Gastrocnemius medialis (tissue), 4 donors: ENCODE measurements at regions of chr5 and their contacts with region 1.

Region 1: DNA sequence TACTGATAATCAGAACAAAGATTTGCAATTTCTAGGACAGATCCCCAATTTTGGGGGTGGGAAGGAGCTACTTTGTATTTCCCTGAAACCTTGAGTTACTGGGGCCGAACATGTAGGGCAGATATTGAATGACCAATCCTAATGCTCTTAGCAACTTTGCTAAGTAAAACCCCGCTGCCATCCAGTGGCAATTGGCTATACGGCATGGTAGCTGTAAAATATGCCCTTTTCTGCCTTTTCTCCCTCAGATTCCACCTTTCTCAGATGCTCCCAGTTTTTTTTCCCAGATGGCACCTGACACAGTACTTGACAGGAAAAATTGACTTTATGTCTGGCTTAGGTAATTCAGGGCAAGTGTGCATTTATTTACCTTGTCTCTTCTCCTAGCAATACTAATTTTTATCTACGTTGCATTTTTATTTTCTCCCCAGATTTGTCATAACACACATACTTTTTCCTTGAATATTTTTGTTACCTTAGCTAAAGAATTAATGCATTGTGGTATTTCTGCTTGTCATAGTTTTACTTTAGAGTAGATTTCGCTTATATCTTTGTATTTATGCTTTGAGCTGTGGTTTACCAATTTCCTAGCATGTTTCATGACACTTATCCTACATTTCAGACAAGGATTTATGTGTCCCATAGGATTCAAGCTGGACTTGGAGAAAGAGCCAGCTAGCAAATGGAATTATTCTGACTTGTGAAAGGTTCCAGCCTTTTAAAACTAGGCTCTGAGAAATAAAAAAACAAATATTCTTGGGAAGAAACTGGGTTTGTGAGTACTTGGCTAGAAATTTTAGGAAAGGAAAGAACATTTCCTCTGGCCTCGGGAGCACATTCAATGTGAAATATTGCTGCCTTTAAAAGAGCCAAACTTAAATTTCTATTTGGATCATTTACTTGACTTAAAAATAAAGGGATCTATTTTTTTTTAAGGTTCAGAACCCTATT is 37.4 kb downstream of the PIK3R1 start:
- DNase-seq: peak; percentile 36 to 61
- ATAC-seq: peak; percentile 77 to 83
- H3K4me3 ChIP-seq: peak overlapping the region in 3 of 4 donors; percentile 6 to 28 (median 19)
- H3K27ac ChIP-seq: peak overlapping the region; percentile 67 to 75 (median 74)
- H3K4me1 ChIP-seq: peaks cover 80 to 88% of the 10 kb centered on the region in 2 donors
- H3K27me3 ChIP-seq: no peaks in the 10 kb centered on the region
- CTCF ChIP-seq: peak; percentile 56 to 86 (median 73)
- POLR2A ChIP-seq: no peak

Region 2: DNA sequence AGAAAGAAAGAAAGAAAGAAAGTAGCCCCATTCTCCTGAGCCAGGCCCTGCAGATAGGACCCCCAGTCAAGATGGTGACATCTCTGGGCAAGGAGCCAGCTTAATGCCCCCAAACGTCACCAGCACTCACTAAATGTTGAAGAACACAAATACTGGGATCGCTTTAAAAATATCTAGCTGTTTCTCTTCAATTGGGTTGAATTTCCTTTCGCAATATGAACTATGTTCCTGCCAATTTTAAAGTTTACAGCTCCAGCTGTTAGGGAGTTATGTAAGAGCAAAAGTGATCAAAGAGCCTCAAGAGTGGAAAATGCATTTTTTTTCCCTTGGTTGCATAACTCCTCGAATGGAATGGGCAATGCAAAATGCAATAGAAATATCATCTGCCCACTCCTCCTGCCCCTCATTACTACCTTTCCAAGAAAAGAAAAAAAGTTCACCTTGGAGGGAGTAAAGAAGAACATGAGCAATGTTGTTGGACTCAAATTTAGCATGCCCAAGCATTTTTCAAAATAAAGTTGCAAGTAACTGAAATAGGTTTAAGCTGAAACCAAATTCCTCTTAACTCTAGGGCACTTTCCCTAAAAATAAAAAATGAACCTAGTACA is 281.6 kb before region 1 on chr5:
- in situ Hi-C with region 1: no loop called
- intact Hi-C with region 1: loop called (anchors 10 kb)
- DNase-seq: peak in 1 of 2 donors; percentile 20
- ATAC-seq: peak; percentile 76 to 86
- H3K4me3 ChIP-seq: no peak overlapping the region
- H3K27ac ChIP-seq: peak overlapping the region; percentile 44 to 56 (median 48)
- H3K4me1 ChIP-seq: peaks cover 0 to 5% of the 10 kb centered on the region in 2 donors
- H3K27me3 ChIP-seq: no peaks in the 10 kb centered on the region
- CTCF ChIP-seq: no peak
- POLR2A ChIP-seq: no peak